ENCODE measurements at regions of chr2 and their contacts with region 1.

Region 1: DNA sequence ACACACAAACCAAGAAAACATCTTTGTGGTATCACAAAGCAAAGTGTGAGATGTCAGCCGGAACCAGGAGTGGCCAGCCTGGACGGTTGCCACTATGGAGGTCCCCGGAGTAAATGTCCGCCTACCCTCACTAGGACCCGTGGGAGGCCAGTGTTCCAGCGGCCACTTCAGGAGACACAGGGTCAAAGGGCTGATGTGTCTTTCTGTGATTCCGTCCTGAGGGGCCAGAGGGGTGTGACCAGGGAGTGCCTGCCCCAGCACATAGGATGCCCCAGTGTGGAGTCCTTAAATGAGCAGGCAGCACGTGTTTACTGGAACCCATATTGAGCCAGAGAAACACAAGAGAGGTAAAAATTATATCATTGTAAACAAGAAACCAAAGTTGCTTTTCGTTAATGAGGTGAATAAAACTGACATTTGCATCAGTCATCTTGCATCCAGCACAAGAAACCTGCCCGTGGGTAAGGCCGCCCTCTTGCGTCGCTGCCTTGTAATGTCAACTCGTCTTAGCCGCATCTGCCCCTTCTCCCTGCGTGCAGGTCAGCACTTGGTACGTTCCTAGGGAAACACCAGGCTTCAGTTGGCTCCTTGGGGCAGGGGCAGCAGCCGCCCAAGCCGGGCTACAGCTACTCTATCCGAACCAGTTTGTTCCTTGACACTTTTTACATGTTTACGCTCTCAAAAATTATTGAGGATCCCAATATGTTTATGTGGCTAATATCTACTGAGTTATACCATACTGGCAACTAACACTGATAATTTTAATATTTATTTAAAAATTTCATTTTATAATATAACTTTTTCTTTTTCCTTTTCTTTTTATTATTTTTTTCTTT is 46.7 kb upstream of the LAPTM4A start:
- DNase-seq: peak; percentile 51 to 97 (median 78)

Region 2: GRCh38 chr2:19955544-19956422 is 142.3 kb before region 1 on chr2:
- intact Hi-C with region 1: loop called (anchors 2 kb)
- DNase-seq: peak in 8 of 10 donors; percentile 18 to 93 (median 50)

Region 3: GRCh38 chr2:20015472-20016083 is 82.5 kb before region 1 on chr2:
- intact Hi-C with region 1: loop called (anchors 1 kb)
- DNase-seq: no peak

Measured in posterior cingulate gyrus (tissue), 11 donors.